ENCODE measurements at regions of chr11 and their contacts with region 1.

Region 1: DNA sequence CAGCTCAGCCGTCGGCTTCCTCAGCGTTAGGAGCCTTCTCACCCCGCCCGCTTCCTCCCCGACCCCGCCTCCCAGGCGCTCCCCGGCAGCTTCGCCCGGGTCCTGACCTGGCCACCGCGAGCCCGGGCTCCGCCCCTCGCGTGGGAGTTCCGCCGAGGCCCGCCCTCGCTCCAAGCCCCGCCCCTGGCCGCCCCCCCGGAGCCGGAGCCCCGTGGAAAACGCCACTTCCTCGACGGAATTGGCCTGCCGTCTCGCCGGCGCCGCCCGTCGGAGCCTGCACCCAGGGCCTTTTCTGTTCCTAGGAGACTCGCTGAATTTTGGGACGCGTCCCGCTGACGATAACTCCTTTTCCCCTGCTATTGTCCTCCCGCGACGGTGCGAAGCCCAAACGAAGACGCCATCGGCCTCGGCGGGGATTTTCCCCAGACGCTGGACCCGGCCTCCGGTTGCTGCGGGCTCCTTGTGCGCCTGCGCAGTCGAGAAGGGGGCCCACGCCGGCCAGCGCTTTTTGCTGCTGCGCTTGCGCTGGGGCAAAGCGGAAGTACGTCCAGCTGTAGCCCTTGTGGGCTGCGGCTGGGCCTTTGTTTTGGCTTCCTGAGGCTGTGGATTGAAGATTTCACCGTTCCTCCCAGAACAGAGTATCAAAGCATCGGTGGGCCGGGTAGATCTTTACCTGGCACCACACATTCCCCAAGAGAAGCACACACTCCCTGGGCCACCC is 10.0 kb downstream of the RELA start:
- DNase-seq: peak; percentile 99
- CTCF ChIP-seq: no peak

Region 2: GRCh38 chr11:65637794-65638317 is 14.8 kb before region 1 on chr11 and contains the start of gene SIPA1:
- CTCF ChIA-PET with region 1: interaction called, 5 read pairs
- POLR2A ChIA-PET with region 1: interaction called, 31 read pairs
- DNase-seq: peak; percentile 90
- CTCF ChIP-seq: peak; percentile 26

Region 3: DNA sequence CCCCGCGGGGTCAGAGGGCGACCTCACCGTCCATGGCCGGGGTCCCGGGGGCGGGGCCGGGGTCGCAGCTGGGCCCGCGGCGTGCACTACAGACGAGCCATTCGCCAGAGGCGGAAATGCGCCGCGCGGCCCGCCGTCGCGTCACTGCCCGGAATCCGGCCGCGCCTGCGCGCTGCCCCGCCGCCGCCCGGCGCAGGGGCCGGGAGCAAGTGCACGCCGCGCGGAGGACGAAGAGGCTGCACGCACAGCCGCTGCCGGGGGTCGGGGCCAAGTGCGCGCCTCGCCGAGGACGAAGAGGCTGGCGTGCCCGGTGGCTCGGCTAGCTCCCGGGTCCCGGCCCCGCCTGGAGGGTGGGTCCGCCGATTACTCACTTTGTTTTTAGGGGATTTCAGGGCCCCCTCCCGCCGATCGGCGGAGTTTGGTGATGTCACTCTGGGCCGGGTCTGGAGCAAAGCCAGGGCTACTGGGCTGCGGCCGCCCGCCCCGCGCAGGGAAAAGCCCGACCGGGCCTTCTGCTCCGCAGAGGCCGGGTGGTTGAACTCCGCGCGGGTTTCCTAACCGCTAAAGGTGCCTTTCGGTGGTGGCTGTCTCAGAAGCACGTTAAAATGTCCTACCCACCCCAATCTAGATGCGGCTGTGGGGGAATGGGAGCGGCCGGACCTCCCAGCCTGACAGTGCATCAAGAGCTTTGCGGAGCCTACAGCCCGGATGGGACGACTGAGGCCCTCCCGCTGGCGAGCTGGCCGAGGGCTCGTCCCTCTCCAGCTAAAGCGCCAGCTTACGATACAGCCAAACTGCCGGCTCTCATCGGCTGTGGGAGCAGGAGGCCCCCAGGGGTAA is 10.3 kb after region 1 on chr11 and contains the start of gene RELA:
- CTCF ChIA-PET with region 1: interaction called, 5 read pairs
- POLR2A ChIA-PET with region 1: interaction called, 15 read pairs
- DNase-seq: peak; percentile 95
- CTCF ChIP-seq: no peak

Measured in GM10248 (cell line).